PC-3 (cell line): ENCODE measurements at regions of chr4 and their contacts with region 1.

Region 1: GRCh38 chr4:145609481-145610427 is 9.4 kb upstream of the MMAA start:
- DNase-seq: peak; percentile 90
- ATAC-seq: peak; percentile 73
- H3K4me3 ChIP-seq: no peak overlapping the region
- H3K27ac ChIP-seq: no peak overlapping the region
- H3K4me1 ChIP-seq: no peaks in the 10 kb centered on the region
- H3K27me3 ChIP-seq: no peaks in the 10 kb centered on the region
- CTCF ChIP-seq: peak; percentile 96

Region 2: DNA sequence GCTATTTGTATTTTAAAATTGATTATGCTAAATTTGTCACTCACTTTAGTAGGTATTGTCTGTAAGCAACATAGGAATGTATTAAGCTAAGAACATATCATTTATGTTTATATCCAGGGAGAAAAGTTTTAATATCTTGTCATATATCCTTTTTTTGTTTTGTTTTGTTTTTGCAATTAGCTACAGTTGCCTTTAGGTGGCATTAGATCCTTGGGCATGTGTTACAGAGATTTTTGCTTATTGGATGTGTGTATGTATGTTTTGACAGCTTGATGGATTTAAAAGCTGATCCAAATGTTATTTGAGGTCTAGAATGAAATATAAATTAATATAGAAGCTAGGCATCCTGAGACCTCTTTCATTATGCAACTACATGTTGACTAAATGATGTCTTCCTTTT is 393.2 kb before region 1 on chr4:
- CTCF ChIA-PET with region 1: interaction called, 3 read pairs
- POLR2A ChIA-PET with region 1: no interaction called
- intact Hi-C with region 1: loop called (anchors 1 kb)
- DNase-seq: peak; percentile 61
- ATAC-seq: no peak
- H3K4me3 ChIP-seq: no peak overlapping the region
- H3K27ac ChIP-seq: no peak overlapping the region
- H3K4me1 ChIP-seq: no peaks in the 10 kb centered on the region
- H3K27me3 ChIP-seq: peaks cover 3% of the 10 kb centered on the region; the same call in 1 of the 2 replicates
- CTCF ChIP-seq: peak; percentile 89

Region 3: DNA sequence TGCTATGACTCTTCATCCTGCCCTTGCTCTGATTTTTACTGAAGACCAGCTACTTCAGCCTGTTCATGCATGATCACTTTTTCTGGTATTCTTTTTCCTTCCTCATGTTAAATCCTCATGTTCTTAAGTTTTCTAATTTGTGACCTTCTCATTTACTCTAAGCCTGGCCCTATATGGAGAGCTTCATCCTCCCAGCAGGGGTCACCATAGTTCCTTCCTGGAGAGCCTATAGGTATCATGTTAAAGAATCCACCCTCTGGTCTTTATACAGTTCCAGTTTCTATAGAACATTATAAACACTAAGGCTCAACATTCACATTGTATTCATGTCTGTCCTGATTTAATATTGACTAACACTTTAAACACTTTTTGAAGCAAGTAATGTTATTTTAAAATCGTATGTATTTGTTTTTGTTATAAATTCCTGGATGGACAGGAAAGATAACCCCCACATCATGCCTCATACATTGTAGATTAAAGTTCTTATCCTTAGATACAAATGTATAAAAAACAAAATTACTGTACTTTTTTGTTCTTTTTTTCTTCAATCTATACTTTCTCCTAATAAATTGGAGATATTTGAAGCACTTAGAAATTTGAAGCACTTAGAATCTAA is 375.6 kb before region 1 on chr4:
- CTCF ChIA-PET with region 1: no interaction called
- POLR2A ChIA-PET with region 1: no interaction called
- intact Hi-C with region 1: loop called (anchors 1 kb)
- DNase-seq: peak; percentile 87
- ATAC-seq: peak; percentile 100
- H3K4me3 ChIP-seq: no peak overlapping the region
- H3K27ac ChIP-seq: no peak overlapping the region
- H3K4me1 ChIP-seq: 0 out of 2 replicates have a peak, but pooled peaks cover 5% of the 10 kb centered on the region
- H3K27me3 ChIP-seq: no peaks in the 10 kb centered on the region
- CTCF ChIP-seq: peak; percentile 98

Region 4: DNA sequence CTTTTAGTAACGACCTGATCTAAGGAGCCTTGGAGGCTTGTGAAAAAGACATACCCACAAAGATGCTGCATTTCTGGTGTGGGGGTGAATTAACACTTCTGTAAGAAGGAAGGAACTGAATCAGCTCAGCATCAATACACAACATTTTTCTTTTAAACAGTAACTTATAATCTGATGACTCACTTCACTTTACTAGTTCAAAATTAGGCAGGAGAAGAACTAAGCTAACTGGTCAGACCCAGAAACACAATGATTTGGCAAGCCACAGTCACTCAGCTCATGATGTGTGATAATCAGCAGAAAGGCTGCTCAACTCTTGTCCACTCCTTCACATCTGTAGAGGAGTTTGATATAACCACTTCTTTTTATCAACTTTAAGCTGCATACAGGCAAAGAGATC is 14.1 kb after region 1 on chr4:
- CTCF ChIA-PET with region 1: no interaction called
- POLR2A ChIA-PET with region 1: no interaction called
- intact Hi-C with region 1: no loop called
- DNase-seq: peak; percentile 71
- ATAC-seq: peak; percentile 49
- H3K4me3 ChIP-seq: no peak overlapping the region
- H3K27ac ChIP-seq: no peak overlapping the region
- H3K4me1 ChIP-seq: peaks cover 23% of the 10 kb centered on the region
- H3K27me3 ChIP-seq: no peaks in the 10 kb centered on the region
- CTCF ChIP-seq: no peak

Region 5: GRCh38 chr4:145681956-145682355 is 72.2 kb after region 1 on chr4:
- CTCF ChIA-PET with region 1: no interaction called
- POLR2A ChIA-PET with region 1: no interaction called
- intact Hi-C with region 1: no loop called
- DNase-seq: no peak
- ATAC-seq: no peak
- H3K4me3 ChIP-seq: no peak overlapping the region
- H3K27ac ChIP-seq: no peak overlapping the region
- H3K4me1 ChIP-seq: peaks cover 16% of the 10 kb centered on the region
- H3K27me3 ChIP-seq: no peaks in the 10 kb centered on the region
- CTCF ChIP-seq: no peak